CD4-positive, alpha-beta memory T cell (primary cell): ENCODE measurements at regions of chr15 and their contacts with region 1.

Region 1: DNA sequence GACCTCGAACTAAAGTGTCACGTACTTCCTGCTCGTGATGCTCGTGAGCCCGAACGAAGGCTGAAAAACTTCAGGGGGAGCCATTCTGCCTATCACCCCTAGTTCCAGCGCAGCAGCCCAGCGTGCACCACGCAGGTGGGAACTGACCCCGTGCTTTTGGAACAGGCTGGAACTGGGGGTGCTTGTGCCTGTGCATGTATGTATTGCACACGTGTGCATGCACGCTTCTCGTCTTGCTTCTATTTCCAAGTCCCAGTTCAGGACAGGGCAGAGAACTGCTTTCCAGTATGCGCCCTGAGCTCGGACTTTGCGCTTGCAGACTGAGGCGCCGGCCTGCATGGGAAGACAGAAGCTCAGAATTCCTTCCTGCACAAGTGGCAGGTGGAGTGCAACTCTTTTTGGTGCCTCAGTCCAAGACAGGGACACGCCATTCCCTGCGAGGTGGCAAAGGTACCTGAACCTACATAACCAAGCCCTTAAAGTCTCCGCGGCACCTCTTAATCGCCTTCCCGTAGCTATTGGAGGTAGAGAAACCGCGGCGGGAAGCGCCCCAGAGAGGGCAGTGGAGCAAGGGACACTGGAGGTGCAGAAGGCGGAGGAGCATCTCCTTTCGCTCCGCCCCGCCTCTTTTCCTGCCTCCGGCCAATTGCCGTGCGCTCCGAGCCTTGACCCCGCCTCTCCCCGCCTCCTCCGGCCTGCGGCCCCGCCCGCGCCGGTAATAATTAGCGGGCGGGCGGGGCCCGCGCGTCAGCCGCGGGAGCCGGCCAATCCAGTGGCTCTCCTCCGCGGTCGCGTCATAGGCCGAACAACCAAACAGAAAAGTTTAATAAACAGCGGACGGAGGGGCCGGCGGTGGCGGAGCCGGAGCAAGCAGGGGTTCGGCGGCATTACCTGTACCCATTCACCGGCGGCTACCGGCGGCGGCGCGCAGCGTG is at the start of gene ZFAND6:
- DNase-seq: peak; percentile 92 to 96 (median 95)
- H3K4me3 ChIP-seq: peak within 1 kb of the TSS; percentile 81 to 83
- H3K4me3 Mint-ChIP-seq: peak within 1 kb of the TSS; percentile 90 to 97 (median 94)
- H3K27ac ChIP-seq: peak within 1 kb of the TSS; percentile 75
- H3K27ac Mint-ChIP-seq: peak within 1 kb of the TSS; percentile 92 to 98 (median 96)
- H3K4me1 ChIP-seq: peaks cover 35% of the 10 kb centered on the region
- H3K4me1 Mint-ChIP-seq: peaks cover 17 to 43% (median 26%) of the 10 kb centered on the region in 4 donors
- H3K27me3 ChIP-seq: no peaks in the 10 kb centered on the region
- H3K27me3 Mint-ChIP-seq: no peaks in the 10 kb centered on the region
- total RNA-seq, gene ZFAND6: 58.3 to 60.9 TPM

Region 2: GRCh38 chr15:79923515-79924395 is 135.4 kb before region 1 on chr15:
- CTCF ChIA-PET with region 1: no interaction called
- POLR2A ChIA-PET with region 1: interaction called, 26 read pairs
- intact Hi-C with region 1: loop called (anchors 1 kb)
- DNase-seq: peak; percentile 97 to 100 (median 99)
- H3K4me3 ChIP-seq: peak overlapping the region; percentile 88 to 91
- H3K4me3 Mint-ChIP-seq: peak overlapping the region; percentile 90 to 94 (median 92)
- H3K27ac ChIP-seq: peak overlapping the region; percentile 85
- H3K27ac Mint-ChIP-seq: peak overlapping the region; percentile 95 to 99 (median 97)
- H3K4me1 ChIP-seq: peaks cover 20% of the 10 kb centered on the region
- H3K4me1 Mint-ChIP-seq: peaks cover 10 to 31% (median 22%) of the 10 kb centered on the region in 4 donors
- H3K27me3 ChIP-seq: no peaks in the 10 kb centered on the region
- H3K27me3 Mint-ChIP-seq: no peaks in the 10 kb centered on the region

Region 3: DNA sequence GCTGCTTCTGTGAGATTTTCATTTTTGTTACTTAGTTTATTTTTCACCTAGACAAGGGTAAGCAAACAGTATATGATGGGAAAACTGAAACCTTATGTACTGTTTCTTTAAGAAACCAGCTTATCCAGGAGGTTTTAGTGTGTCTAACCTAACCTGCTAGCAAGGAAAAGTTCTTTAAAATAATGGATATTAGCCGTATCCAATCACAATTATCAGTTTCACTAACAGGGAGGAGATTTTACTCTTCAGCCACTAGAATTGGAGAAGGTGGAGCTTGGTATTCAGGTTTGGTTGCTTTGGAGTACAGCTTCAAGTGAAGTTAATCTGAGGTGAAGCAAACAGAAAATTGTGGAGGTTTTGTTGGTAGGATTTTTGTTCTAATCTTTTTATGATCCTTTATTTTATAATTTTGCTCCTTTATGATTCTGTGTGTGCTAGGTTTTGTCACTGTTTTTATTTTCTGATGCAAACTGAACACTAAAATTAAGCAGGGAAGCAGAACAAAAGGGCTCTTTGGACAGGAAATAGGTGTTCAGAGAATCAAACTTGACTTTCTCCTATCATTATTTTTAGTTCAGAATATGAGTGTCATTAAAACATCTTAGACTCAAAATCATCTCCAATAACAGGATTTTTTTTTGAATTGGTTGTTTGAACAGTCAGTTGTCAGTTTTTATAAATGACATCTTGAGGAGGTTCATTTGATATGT is 13.3 kb after region 1 on chr15:
- CTCF ChIA-PET with region 1: interaction called, 13 read pairs
- POLR2A ChIA-PET with region 1: interaction called, 32 read pairs
- intact Hi-C with region 1: loop called (anchors 1 kb)
- DNase-seq: peak; percentile 59 to 71 (median 65)
- H3K4me3 ChIP-seq: no peak overlapping the region
- H3K4me3 Mint-ChIP-seq: peak overlapping the region; percentile 51 to 87 (median 84)
- H3K27ac ChIP-seq: peak overlapping the region; percentile 21
- H3K27ac Mint-ChIP-seq: peak overlapping the region in 6 of 7 donors; percentile 3 to 79 (median 42)
- H3K4me1 ChIP-seq: peaks cover 45% of the 10 kb centered on the region
- H3K4me1 Mint-ChIP-seq: peaks cover 44 to 75% (median 61%) of the 10 kb centered on the region in 4 donors
- H3K27me3 ChIP-seq: no peaks in the 10 kb centered on the region
- H3K27me3 Mint-ChIP-seq: no peaks in the 10 kb centered on the region

Region 4: DNA sequence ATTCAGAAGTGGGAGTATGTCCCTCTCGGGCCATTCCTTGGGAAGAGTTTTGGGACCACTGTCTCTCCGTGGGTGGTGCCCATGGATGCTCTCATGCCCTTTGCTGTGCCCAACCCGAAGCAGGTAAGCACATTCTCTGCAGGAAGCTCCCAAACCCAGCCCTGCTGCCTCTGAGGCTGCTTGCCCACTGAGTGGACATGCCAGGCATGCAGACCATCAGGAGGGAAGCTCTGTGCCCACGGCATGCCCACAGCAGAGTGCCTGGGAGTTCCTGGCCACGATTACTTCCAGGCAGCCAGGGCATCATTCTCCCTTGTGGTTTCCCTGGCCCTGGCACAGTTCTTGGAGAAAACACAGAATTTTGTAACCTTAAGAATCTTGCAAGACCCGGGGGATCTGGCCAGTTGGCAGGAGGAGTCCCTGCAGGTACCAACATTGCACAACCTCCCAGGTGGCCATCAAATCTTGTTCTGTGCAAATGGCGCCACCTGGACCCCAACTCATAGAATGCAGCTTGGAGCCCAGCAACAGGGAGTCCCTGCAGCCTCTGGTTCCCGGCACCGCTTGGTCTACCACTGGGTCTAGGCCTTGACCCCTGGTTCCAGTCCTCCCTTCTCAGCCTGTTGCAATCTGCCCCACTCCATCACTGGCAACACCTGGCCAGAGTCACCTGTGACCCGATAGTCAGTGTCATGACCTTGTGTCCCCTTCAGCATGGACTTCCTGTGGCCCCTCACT is 114.1 kb after region 1 on chr15:
- CTCF ChIA-PET with region 1: interaction called, 11 read pairs
- POLR2A ChIA-PET with region 1: no interaction called
- intact Hi-C with region 1: loop called (anchors 5 kb)
- DNase-seq: peak; percentile 55 to 60 (median 59)
- H3K4me3 ChIP-seq: no peak overlapping the region
- H3K4me3 Mint-ChIP-seq: peak overlapping the region in 1 of 8 donors; percentile 15
- H3K27ac ChIP-seq: no peak overlapping the region
- H3K27ac Mint-ChIP-seq: no peak overlapping the region
- H3K4me1 ChIP-seq: no peaks in the 10 kb centered on the region
- H3K4me1 Mint-ChIP-seq: no peaks in the 10 kb centered on the region
- H3K27me3 ChIP-seq: no peaks in the 10 kb centered on the region
- H3K27me3 Mint-ChIP-seq: no peaks in the 10 kb centered on the region

Region 5: DNA sequence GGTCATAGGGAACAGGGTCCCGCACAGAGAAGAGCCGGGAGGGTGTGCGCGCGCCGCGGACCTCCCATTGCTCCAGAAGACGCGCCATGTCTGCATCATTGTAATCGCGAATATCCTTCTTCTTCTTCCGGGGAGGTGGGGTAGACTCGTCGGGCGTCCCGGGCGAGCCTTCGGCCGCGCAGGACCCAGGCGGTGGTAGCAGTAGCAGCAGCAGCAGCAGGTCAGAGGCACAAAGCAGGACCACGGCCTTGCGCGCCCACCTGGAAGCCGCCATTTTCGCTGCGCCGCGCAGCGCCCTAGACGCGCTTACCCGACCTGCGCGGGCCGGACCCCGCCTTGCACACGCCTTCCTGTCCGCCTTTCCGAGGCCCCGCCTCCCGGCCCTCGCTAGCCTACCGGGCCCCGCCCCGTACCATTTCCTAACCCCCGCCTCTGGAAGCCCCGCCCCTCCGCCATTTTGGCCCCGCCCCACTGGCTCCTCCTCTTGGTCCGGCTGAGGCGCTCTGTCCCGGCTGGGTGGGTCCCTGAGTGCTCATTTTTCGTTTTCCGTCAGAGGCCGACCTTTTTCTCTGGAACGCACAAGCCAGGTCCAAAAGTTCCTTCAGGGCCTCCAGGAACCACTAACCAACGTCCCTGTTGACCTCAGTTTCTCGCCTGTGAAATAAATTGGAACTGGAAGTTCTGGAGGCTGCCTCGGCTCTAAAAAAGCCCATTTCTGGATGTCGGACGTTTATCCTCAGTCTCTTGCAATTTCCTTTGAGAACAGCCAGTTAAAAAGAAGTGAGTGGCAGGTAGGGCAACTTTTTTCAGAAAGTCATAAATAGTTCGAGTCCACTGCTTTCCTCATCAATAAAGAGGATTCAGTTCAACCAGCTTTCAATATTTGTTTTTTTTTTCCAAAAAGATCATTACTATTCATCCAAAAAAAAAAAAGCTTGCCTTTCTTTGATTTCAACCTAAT is 930.7 kb after region 1 on chr15 and contains the start of gene MESD:
- CTCF ChIA-PET with region 1: no interaction called
- POLR2A ChIA-PET with region 1: no interaction called
- intact Hi-C with region 1: loop called (anchors 10 kb)
- DNase-seq: peak; percentile 92 to 95 (median 94)
- H3K4me3 ChIP-seq: peak within 1 kb of the TSS; percentile 54 to 97
- H3K4me3 Mint-ChIP-seq: peak within 1 kb of the TSS; percentile 91 to 99 (median 99)
- H3K27ac ChIP-seq: peak within 1 kb of the TSS; percentile 79
- H3K27ac Mint-ChIP-seq: peak within 1 kb of the TSS; percentile 95 to 99 (median 99)
- H3K4me1 ChIP-seq: peaks cover 60% of the 10 kb centered on the region
- H3K4me1 Mint-ChIP-seq: peaks cover 38 to 71% (median 56%) of the 10 kb centered on the region in 4 donors
- H3K27me3 ChIP-seq: no peaks in the 10 kb centered on the region
- H3K27me3 Mint-ChIP-seq: no peaks in the 10 kb centered on the region
- total RNA-seq, gene MESD: 43.3 to 44.6 TPM